SK-N-SH (cell line): ENCODE measurements at regions of chr20 and their contacts with region 1.

Region 1: DNA sequence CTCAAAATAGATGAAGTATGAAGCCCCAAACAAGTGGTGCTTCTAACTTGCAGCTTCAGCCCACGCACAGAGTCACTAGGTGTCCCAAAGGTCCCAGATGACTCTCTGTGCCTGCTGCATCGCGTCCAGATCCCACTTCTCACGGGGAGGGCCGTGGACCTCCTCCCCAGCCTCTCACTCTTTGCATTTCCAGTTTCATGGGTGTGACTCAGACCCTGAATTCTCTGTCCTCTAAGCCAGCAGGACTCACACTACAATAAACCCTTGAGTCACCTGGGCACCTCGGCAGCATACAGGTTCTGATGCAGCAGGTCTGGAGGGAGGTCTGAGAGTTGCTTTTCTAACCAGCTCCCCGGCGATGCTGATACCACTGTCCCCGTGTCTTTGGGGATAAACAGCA is 114.0 kb upstream of the RIN2 start:
- DNase-seq: no peak
- H3K4me3 ChIP-seq: no peak overlapping the region
- H3K27ac ChIP-seq: no peak overlapping the region
- H3K4me1 ChIP-seq: no peaks in the 10 kb centered on the region
- H3K27me3 ChIP-seq: peaks cover 23% of the 10 kb centered on the region; the same call in 1 of the 2 replicates
- CTCF ChIP-seq: no peak
- EP300 ChIP-seq: no peak
- RAD21 ChIP-seq: no peak

Region 2: DNA sequence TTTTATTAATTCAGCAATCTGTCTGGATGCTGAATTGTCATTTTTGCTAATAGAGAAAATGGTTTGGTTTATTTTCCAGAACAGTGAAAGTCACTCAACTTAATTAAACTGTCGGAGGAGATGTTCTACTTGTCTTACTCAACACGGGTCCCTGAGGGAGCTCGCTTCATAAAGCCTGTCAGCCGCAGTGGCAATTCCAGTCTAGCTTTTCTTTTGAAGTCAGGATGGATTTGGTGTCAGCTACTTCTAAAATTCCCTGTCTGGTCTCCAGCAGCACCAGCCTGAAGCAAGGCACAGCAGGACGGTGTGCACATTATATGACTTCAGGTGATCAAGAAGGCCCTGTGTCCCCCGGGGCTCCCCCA is 170.2 kb before region 1 on chr20:
- CTCF ChIA-PET with region 1: no interaction called
- POLR2A ChIA-PET with region 1: no interaction called
- DNase-seq: no peak
- H3K4me3 ChIP-seq: no peak overlapping the region
- H3K27ac ChIP-seq: no peak overlapping the region
- H3K4me1 ChIP-seq: no peaks in the 10 kb centered on the region
- H3K27me3 ChIP-seq: peaks cover 39% of the 10 kb centered on the region; the same call in 1 of the 2 replicates
- CTCF ChIP-seq: no peak
- EP300 ChIP-seq: no peak
- RAD21 ChIP-seq: no peak

Region 3: GRCh38 chr20:19628570-19629169 is 15.4 kb before region 1 on chr20:
- CTCF ChIA-PET with region 1: interaction called, 24 read pairs
- POLR2A ChIA-PET with region 1: no interaction called
- DNase-seq: peak; percentile 62
- H3K4me3 ChIP-seq: no peak overlapping the region; a peak in 1 of 4 replicates
- H3K27ac ChIP-seq: no peak overlapping the region
- H3K4me1 ChIP-seq: no peaks in the 10 kb centered on the region
- H3K27me3 ChIP-seq: no peaks in the 10 kb centered on the region
- CTCF ChIP-seq: peak; percentile 72
- EP300 ChIP-seq: no peak
- RAD21 ChIP-seq: peak; percentile 55